PC-9 (cell line): ENCODE measurements at regions of chr2 and their contacts with region 1.

Region 1: GRCh38 chr2:204325468-204325867 is 219.8 kb upstream of the PARD3B start:
- DNase-seq: peak; percentile 48 to 62
- H3K4me3 ChIP-seq: no peak overlapping the region
- H3K27ac ChIP-seq: no peak overlapping the region
- H3K4me1 ChIP-seq: peaks cover 6% of the 10 kb centered on the region
- H3K27me3 ChIP-seq: no peaks in the 10 kb centered on the region
- CTCF ChIP-seq: peak; percentile 81

Region 2: DNA sequence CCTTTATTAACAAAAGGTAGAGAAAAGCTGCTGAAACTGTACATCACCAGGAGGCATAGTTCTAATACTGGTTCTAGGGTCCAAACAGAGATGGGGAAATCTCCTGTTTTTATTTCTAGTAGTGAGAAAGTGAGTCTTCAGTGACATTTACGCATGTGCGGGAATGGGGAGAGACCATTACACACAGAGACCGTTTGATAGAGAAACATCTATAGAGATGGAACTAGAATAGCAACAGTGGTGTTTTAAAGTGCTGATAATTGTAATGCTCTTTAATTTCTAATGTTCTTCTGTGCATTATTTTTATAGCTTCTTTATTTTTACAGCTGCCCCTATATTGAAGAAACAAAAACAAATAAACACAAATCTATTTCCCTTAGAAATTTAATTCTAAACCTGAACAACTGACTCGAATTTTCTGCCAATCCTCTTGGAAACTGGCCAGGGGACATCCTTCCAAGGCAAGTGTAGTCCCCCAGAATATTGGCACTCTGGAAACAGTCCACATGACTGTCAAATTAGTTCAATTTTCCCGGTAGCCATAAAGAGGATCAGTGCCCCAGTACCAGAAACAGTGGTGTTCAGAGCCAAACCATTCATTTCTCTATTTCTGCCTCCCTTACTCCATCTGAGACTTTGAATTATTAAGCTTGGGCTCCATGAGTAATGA is 128.0 kb before region 1 on chr2:
- CTCF ChIA-PET with region 1: no interaction called
- POLR2A ChIA-PET with region 1: no interaction called
- intact Hi-C with region 1: no loop called
- DNase-seq: no peak
- H3K4me3 ChIP-seq: no peak overlapping the region
- H3K27ac ChIP-seq: no peak overlapping the region
- H3K4me1 ChIP-seq: no peaks in the 10 kb centered on the region
- H3K27me3 ChIP-seq: no peaks in the 10 kb centered on the region; the same call in 1 of the 2 replicates
- CTCF ChIP-seq: no peak

Region 3: DNA sequence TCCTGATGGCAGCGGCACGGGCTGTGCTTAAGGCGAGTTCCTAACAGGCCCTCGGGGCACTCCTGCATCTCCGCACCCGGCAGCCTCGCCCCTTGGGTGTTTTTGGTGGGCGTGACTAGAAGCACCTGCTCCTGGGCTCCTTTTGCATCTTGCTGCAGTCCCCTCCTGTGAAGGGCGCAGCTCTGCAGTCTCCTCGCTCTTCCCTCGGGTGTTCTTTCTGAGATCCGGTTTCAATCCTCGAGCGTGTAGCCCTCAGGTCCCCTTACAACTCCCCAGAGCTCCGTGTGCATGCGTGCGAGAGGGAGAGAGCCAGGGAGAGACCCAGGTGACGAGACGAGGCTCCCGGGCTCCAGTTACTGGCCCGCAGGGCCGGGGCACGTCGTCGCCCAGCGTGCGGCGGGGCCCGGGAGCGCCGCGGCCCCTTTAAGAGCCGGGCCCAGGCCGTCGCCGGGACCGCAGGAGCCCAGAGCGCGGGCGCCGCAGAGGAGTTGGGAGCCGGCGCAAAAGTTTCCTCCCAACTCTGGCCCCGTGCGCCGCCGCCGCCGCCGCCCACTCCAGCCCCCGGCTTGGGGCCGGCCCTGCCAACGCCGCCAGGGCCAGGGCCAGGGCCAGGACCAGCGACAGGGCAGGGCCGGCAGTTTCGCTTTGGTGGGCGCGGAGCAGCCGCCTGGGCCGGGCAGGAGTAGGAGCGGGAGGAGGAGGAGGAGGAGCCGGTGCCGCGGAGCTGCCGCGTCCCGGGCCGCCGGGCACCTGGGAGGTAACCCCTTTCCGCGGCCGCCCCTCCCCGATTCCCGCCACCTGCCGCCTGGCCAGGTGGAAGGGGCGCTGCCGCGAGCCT is 219.8 kb after region 1 on chr2 and contains the start of gene PARD3B:
- CTCF ChIA-PET with region 1: no interaction called
- POLR2A ChIA-PET with region 1: no interaction called
- intact Hi-C with region 1: loop called (anchors 1 kb)
- DNase-seq: peak; percentile 43 to 76
- H3K4me3 ChIP-seq: peak within 1 kb of the TSS; percentile 90
- H3K27ac ChIP-seq: peak within 1 kb of the TSS; percentile 61
- H3K4me1 ChIP-seq: peaks cover 31% of the 10 kb centered on the region
- H3K27me3 ChIP-seq: no peaks in the 10 kb centered on the region
- CTCF ChIP-seq: no peak
- total RNA-seq, gene PARD3B: 7.6 and 13.2 TPM in 2 replicates

Region 4: DNA sequence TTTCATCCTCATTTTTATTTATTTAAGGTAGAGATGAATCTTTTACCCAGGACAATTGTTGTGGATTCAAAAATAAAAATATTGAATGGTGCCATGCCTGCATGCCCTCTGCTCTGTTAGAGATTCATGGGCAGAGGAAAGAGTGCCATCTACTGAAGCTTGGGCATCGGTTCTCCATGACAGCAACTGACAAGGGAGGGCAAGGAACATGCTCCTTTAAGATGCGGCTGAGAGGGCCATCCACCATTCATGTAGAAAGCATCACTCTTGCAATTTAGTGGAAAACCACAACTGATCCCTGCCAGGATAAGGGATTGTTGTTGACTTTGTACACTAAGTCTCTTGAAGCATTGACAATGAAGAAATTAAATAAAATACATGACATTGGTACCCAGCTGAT is 299.7 kb after region 1 on chr2:
- CTCF ChIA-PET with region 1: no interaction called
- POLR2A ChIA-PET with region 1: no interaction called
- intact Hi-C with region 1: loop called (anchors 1 kb)
- DNase-seq: no peak
- H3K4me3 ChIP-seq: no peak overlapping the region
- H3K27ac ChIP-seq: no peak overlapping the region
- H3K4me1 ChIP-seq: no peaks in the 10 kb centered on the region
- H3K27me3 ChIP-seq: no peaks in the 10 kb centered on the region
- CTCF ChIP-seq: peak; percentile 30; the same call in 1 of the 2 replicates

Region 5: DNA sequence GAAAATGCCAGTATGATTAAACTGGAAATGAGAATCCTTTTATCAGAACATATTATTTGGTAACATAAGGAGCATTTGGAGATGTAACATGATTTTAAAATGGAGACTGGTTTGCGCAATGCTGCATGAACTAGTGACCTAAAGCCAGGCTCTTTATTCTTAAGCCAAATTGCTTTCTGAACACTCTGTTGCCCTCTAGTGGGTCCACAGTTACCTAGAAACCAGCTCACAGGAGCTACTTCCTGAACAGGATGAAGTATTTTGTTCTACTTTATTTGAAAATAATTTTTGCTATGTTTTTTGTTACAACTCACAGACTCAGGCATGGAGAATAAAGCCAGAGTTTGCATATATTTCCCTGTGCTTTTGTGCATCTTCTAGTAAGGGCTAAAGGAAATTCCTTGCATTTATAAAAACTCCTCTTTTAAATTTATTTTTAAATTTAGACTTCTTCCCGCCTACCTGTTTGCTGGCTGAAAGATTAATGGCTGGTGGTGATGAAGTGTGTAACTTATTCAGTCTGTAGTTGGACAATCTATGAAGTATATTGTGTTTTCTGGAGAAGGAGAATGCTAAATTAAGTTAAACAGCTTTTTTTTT is 366.5 kb after region 1 on chr2:
- CTCF ChIA-PET with region 1: no interaction called
- POLR2A ChIA-PET with region 1: no interaction called
- intact Hi-C with region 1: loop called (anchors 1 kb)
- DNase-seq: peak; percentile 10 to 58
- H3K4me3 ChIP-seq: no peak overlapping the region
- H3K27ac ChIP-seq: no peak overlapping the region
- H3K4me1 ChIP-seq: no peaks in the 10 kb centered on the region
- H3K27me3 ChIP-seq: no peaks in the 10 kb centered on the region
- CTCF ChIP-seq: peak; percentile 70

Region 6: GRCh38 chr2:205166745-205167144 is 841.3 kb after region 1 on chr2:
- CTCF ChIA-PET with region 1: interaction called, 11 read pairs
- POLR2A ChIA-PET with region 1: no interaction called
- intact Hi-C with region 1: no loop called
- DNase-seq: no peak
- H3K4me3 ChIP-seq: no peak overlapping the region
- H3K27ac ChIP-seq: no peak overlapping the region
- H3K4me1 ChIP-seq: no peaks in the 10 kb centered on the region
- H3K27me3 ChIP-seq: no peaks in the 10 kb centered on the region
- CTCF ChIP-seq: no peak

Region 7: DNA sequence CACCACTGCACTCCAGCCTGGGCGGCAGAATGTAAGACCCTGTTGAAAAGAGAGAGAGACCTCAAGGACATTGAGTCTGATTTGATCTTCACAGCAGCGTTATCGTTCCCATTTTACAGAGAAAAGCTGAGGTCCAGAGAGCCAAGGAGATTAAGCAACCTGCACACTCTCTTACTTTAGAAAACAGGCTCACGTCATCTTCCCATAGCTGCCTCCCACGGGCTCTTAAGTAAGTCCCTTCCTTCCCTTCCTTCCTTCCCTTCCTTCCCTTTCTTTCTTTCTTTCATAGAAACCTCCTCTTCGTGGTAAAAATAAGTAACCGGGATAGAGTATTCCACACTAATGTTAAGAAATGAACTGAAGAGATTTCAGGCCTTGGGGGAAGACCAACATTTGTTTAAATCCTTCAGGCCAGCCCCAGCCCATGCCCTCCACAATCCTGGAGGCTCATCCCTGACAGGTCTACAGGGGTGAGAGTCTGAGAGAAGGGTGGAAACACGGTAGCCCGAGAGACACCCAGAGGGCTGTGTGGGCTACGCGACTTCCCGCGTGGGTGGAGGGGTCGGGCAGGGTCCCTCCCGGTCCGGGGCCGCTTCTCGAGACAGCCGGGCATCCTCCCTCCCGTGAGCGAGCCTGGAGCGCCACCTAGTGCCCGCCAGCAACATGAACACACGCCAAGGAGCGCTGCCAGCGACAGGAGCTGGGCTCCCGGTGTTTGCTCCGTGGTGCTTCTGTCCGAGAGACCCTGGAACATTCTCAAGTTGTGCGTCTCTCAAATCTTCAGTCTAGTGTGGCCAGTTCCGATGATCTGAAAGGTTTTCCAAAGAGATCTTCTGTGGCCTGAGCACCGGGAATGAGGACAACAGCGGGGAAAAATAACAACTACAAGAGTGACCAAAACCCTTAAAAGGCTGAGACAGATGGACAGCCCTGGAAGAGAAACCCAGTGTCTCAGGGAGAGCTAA is 1600.2 kb after region 1 on chr2:
- CTCF ChIA-PET with region 1: no interaction called
- POLR2A ChIA-PET with region 1: no interaction called
- intact Hi-C with region 1: loop called (anchors 10 kb)
- DNase-seq: peak in 1 of 2 experiments; percentile 50
- H3K4me3 ChIP-seq: peak overlapping the region; percentile 43; the same call in 1 of the 2 replicates
- H3K27ac ChIP-seq: no peak overlapping the region
- H3K4me1 ChIP-seq: 0 out of 2 replicates have a peak, but pooled peaks cover 4% of the 10 kb centered on the region
- H3K27me3 ChIP-seq: peaks cover 12% of the 10 kb centered on the region
- CTCF ChIP-seq: peak; percentile 90